ENCODE measurements at regions of chr3 and their contacts with region 1.

Region 1: DNA sequence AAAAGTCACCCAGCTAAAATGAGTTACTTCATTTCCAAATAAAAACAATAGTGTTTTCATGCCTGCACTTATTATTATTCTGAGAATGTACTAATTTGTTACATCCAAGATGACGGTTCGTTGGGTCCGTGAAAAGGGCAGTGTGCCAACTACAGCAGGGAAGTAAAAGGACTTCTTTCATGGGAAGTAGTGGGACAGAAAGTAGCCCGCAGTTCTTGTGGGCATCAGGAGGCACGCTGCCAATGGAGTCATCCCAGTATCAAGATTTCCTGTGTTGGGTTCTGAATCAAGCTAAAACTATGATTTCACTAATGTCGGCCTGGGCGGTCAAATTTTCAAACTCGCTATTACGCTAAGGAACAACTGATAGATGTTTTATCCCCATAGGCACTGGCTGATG is 254.5 kb upstream of the SOX2 start:
- DNase-seq: peak; percentile 24
- H3K4me3 ChIP-seq: peak overlapping the region; percentile 10
- CTCF ChIP-seq: no peak

Region 2: GRCh38 chr3:181534781-181535221 is 77.6 kb after region 1 on chr3:
- in situ Hi-C with region 1: loop called (anchors 5 kb)
- DNase-seq: no peak
- H3K4me3 ChIP-seq: no peak overlapping the region
- CTCF ChIP-seq: no peak

Region 3: GRCh38 chr3:181623924-181624694 is 166.9 kb after region 1 on chr3:
- in situ Hi-C with region 1: no loop called
- DNase-seq: peak; percentile 29
- H3K4me3 ChIP-seq: no peak overlapping the region
- CTCF ChIP-seq: no peak

Region 4: GRCh38 chr3:182118081-182118480 is 660.9 kb after region 1 on chr3:
- in situ Hi-C with region 1: no loop called
- DNase-seq: peak; percentile 97
- H3K4me3 ChIP-seq: no peak overlapping the region
- CTCF ChIP-seq: no peak

Measured in astrocyte of the cerebellum (primary cell).